Calu3 (cell line): ENCODE measurements at regions of chr7 and their contacts with region 1.

Region 1: DNA sequence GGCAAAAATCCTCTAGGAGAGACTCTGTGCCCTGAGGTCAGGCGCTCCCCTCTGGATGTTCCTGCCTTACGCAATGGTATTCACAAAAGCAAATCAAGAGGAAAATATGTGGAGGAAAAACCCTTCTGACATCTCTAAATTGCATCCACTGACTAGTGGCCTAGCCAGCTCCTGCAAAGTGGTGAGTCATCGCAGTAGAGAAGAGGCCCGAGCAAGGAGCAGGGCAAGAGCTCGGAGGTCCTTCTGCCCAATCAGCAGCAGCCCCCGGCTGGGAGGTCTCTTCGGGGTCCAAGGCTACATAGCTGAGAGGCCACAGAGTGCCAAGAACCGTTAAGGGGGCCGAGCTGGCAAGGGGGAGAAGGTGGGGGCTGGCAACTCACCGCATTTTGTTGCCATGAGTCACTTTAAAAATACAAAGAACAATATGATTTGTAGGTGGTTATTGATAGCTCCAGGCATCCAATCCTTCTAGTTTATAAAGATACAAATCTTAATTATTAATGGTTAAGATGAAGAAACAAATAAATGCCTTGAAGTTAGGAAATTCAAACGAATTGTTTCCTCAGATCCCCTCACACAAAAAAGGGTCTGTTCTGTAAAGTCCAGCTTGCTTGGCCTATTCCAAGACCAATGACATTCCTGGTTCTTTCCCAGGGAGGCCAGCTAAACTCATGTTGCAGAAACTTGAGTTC is 161.6 kb downstream of the PKD1L1 start:
- DNase-seq: peak; percentile 99
- H3K4me3 Mint-ChIP-seq: peak overlapping the region; percentile 34
- H3K27ac Mint-ChIP-seq: peak overlapping the region; percentile 87
- H3K4me1 Mint-ChIP-seq: peaks cover 73% of the 10 kb centered on the region
- H3K27me3 Mint-ChIP-seq: no peaks in the 10 kb centered on the region
- CTCF ChIP-seq: no peak

Region 2: DNA sequence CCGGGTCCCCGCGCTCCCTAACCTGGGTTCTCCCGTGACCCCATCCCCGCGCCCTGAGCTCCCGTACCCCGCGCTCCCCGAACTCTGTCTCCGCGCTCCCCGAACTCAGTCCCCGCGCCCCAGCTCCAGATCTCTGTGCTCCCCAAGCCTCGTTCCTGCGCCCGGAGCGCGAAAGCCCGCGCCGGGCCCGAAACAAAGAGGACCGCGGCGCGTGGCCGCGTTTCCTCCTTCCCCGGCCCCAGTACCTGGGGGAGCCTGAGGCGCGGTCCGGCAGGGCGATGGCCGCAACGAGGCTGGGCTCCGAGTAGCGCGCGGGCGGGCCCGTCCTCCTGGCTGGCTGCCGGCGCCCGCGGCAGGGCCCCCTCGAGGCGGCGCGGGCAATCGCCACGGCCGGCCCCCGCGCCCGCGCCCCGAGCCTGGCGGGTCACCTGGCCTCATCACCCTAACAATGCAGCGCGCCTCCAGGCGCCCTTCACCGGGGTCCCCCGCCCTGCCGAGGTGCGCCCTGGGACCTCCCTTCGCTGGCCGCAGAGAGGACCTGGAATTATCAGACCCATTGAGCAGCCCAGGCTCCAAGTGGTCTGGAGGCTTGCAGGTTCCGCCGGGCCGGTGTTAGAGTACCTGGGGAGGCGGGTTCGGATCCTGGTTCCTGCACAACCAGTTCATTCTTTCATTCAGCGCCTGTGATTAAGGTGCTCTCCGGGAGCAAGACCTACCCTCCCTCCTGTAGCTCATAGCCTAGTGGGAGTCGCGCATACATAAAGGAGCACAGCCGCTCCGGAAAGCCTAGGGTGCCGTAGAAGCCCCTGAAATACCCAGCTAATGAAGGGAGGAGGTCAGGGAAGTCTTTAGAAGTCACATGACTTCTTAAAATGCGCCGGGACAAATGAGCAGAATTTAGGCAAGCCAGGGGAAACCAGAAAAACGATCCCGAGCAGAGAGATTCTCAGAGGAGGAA is 204.6 kb before region 1 on chr7 and contains the start of gene TNS3:
- CTCF ChIA-PET with region 1: interaction called, 4 read pairs
- intact Hi-C with region 1: loop called (anchors 2 kb)
- DNase-seq: peak; percentile 86
- H3K4me3 Mint-ChIP-seq: peak within 1 kb of the TSS; percentile 100
- H3K27ac Mint-ChIP-seq: peak within 1 kb of the TSS; percentile 88
- H3K4me1 Mint-ChIP-seq: peaks cover 55% of the 10 kb centered on the region
- H3K27me3 Mint-ChIP-seq: no peaks in the 10 kb centered on the region
- CTCF ChIP-seq: peak; percentile 36
- total RNA-seq, gene TNS3: 102 and 135 TPM in 2 replicates

Region 3: GRCh38 chr7:47605816-47606575 is 180.7 kb before region 1 on chr7:
- CTCF ChIA-PET with region 1: interaction called, 4 read pairs
- intact Hi-C with region 1: loop called (anchors 1 kb)
- DNase-seq: no peak
- H3K4me3 Mint-ChIP-seq: no peak overlapping the region
- H3K27ac Mint-ChIP-seq: peak overlapping the region; percentile 88
- H3K4me1 Mint-ChIP-seq: peaks cover 67% of the 10 kb centered on the region
- H3K27me3 Mint-ChIP-seq: no peaks in the 10 kb centered on the region
- CTCF ChIP-seq: no peak

Region 4: GRCh38 chr7:47669061-47669891 is 117.4 kb before region 1 on chr7:
- CTCF ChIA-PET with region 1: no interaction called
- intact Hi-C with region 1: loop called (anchors 5 kb)
- DNase-seq: peak; percentile 85
- H3K4me3 Mint-ChIP-seq: no peak overlapping the region
- H3K27ac Mint-ChIP-seq: peak overlapping the region; percentile 50
- H3K4me1 Mint-ChIP-seq: peaks cover 37% of the 10 kb centered on the region
- H3K27me3 Mint-ChIP-seq: no peaks in the 10 kb centered on the region
- CTCF ChIP-seq: no peak

Region 5: DNA sequence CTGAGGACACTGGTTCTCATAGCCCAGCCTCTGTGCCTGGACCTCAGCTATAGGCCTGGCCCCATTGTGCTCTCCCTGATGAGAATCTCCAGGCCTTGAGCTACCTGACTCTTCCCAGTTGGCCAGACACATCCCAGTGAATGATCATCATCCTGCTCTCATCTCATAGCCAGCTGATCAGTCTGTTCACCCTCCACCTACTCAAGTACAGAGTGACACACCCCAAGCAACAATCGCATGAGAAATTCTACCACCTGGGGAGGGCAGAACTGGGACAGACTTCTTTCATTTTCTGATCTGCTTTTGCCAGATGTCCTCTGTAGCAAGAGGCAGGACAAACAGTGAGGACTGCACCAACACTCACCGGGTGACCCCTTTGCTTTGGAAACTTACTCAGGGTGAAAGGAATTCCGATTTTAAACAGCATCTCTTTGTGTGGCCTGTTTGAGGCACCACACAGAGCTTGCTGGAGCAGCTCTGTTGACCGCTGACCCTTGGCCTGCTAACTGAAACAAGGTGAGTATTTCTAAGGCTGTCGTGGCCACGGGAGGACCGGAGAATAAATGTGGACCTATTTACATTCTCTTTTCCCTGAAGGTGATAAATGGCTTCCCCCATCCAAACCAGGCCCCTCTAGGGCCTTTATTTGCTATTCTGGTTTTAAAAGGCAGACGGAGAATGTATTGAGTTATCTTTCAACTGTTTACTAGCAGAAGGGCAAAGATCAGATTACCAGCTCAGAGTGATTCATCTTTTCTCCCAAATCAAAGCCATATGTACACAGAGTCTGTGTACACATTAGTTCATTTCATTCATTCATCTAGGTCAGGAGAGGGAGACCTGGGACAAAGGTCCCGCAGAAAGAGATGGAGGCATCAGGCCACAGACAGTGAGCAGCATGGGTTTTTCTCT is 23.4 kb before region 1 on chr7:
- CTCF ChIA-PET with region 1: interaction called, 9 read pairs
- intact Hi-C with region 1: loop called (anchors 1 kb)
- DNase-seq: peak; percentile 78
- H3K4me3 Mint-ChIP-seq: peak overlapping the region; percentile 15
- H3K27ac Mint-ChIP-seq: peak overlapping the region; percentile 86
- H3K4me1 Mint-ChIP-seq: peaks cover 54% of the 10 kb centered on the region
- H3K27me3 Mint-ChIP-seq: no peaks in the 10 kb centered on the region
- CTCF ChIP-seq: no peak